Activated naive CD4-positive, alpha-beta T cell treated with anti-CD3 and anti-CD28 coated beads for 36 hours (primary cell): ENCODE measurements at regions of chr17 and their contacts with region 1.

Region 1: GRCh38 chr17:35161281-35161761 is 13.7 kb downstream of the UNC45B start:
- DNase-seq: peak; percentile 35
- H3K4me3 Mint-ChIP-seq: peak overlapping the region; percentile 47
- H3K27ac Mint-ChIP-seq: peak overlapping the region; percentile 73
- H3K4me1 Mint-ChIP-seq: peaks cover 50% of the 10 kb centered on the region
- H3K27me3 Mint-ChIP-seq: no peaks in the 10 kb centered on the region

Region 2: DNA sequence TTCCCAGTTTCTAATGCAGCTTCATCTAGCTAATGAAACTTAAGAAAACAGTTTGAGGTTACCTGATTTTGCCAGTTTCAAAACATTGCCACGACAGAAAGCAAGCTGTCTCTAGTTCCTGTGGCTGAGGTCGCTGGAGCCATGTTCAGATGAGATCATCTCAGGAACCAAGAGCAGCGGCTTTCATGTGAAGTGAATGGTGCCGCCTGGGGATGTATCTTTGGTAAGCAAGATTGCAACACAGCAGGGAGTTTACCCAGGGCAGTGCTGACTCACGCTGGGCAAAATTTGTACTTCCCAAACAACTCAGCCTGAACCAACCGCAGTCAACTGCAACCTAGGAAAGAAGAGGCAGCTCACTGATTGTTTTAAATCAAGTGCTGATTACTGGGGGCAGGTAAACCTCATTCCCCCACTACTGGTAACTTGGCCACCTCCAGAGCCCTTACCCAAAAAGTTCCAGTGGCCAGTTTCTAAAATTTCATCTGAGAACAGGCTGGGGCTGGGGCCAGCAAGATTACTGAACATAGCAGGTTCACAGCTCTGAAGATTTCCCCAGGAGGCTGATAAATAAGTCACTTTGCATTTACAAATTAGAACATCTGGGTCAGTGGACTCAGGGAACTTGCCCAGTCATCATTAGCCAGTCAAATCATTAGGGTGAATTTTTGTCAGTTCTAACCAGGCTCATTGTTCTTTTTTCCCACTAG is 97.7 kb before region 1 on chr17 and contains the start of gene RFFL:
- CTCF ChIA-PET with region 1: no interaction called
- intact Hi-C with region 1: loop called (anchors 1 kb)
- DNase-seq: peak; percentile 97
- H3K4me3 Mint-ChIP-seq: peak within 1 kb of the TSS; percentile 23
- H3K27ac Mint-ChIP-seq: peak within 1 kb of the TSS; percentile 65
- H3K4me1 Mint-ChIP-seq: peaks cover 57% of the 10 kb centered on the region
- H3K27me3 Mint-ChIP-seq: no peaks in the 10 kb centered on the region
- total RNA-seq, gene RFFL: 17.8 to 18.2 TPM

Region 3: GRCh38 chr17:35103271-35103670 is 58.0 kb before region 1 on chr17:
- CTCF ChIA-PET with region 1: no interaction called
- intact Hi-C with region 1: no loop called
- DNase-seq: no peak
- H3K4me3 Mint-ChIP-seq: no peak overlapping the region
- H3K27ac Mint-ChIP-seq: no peak overlapping the region
- H3K4me1 Mint-ChIP-seq: peaks cover 2% of the 10 kb centered on the region
- H3K27me3 Mint-ChIP-seq: no peaks in the 10 kb centered on the region

Region 4: GRCh38 chr17:35141681-35142466 is 19.4 kb before region 1 on chr17 and contains the start of gene NLE1:
- CTCF ChIA-PET with region 1: interaction called, 5 read pairs
- intact Hi-C with region 1: loop called (anchors 1 kb)
- DNase-seq: peak; percentile 89
- H3K4me3 Mint-ChIP-seq: peak within 1 kb of the TSS; percentile 77
- H3K27ac Mint-ChIP-seq: peak within 1 kb of the TSS; percentile 82
- H3K4me1 Mint-ChIP-seq: peaks cover 25% of the 10 kb centered on the region
- H3K27me3 Mint-ChIP-seq: no peaks in the 10 kb centered on the region
- total RNA-seq, gene NLE1: 33.0 to 35.2 TPM

Region 5: GRCh38 chr17:35214631-35215273 is 53.4 kb after region 1 on chr17:
- CTCF ChIA-PET with region 1: interaction called, 3 read pairs
- intact Hi-C with region 1: loop called (anchors 1 kb)
- DNase-seq: peak; percentile 48
- H3K4me3 Mint-ChIP-seq: peak overlapping the region; percentile 45
- H3K27ac Mint-ChIP-seq: peak overlapping the region; percentile 88
- H3K4me1 Mint-ChIP-seq: peaks cover 84% of the 10 kb centered on the region
- H3K27me3 Mint-ChIP-seq: no peaks in the 10 kb centered on the region

Region 6: DNA sequence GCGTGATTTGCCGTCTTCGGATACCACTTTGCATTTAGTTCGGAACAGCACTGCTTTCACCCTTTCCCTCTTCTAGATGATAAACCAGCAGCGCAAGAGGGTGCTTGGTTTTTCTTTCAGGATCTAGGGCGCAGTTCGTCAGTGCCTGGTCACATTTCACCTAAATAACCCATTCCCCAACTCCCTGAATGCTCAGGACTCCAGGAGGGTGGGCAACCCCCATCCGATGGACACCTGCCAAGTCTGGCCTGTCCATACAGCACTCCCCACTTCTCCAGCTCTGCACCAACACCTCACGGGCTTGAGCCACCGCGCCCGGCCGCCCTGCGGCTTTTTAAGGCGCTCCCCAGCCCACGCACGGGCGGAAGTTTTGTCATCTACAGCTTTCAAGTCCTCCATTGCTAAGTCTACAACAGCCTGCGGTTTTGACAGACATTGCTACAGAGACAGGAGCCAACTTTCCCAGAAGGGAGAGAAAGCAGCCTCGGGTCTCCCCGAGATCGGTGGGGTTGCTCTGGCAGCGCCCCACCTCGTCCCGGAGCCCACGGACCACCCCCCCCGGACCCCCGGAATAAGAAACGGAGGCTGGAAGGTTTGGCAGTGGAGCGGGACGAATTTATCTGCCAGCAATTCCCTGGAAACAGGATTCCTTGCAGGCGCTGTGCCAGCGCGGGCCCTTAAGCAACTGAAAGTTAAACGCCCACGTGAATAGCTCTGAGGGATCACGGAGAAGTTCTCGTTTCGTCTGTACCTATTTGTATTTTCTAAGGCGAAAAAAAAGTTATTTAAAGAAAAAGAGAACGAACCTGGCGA is 325.8 kb after region 1 on chr17:
- CTCF ChIA-PET with region 1: no interaction called
- intact Hi-C with region 1: loop called (anchors 5 kb)
- DNase-seq: peak; percentile 90
- H3K4me3 Mint-ChIP-seq: peak overlapping the region; percentile 82
- H3K27ac Mint-ChIP-seq: peak overlapping the region; percentile 83
- H3K4me1 Mint-ChIP-seq: peaks cover 27% of the 10 kb centered on the region
- H3K27me3 Mint-ChIP-seq: no peaks in the 10 kb centered on the region